ENCODE measurements at regions of chr2 and their contacts with region 1.

Region 1: GRCh38 chr2:24084386-24085361 is at the start of gene TP53I3:
- DNase-seq: peak; percentile 94
- ATAC-seq: peak; percentile 97
- total RNA-seq, gene TP53I3: 17.2 TPM

Region 2: DNA sequence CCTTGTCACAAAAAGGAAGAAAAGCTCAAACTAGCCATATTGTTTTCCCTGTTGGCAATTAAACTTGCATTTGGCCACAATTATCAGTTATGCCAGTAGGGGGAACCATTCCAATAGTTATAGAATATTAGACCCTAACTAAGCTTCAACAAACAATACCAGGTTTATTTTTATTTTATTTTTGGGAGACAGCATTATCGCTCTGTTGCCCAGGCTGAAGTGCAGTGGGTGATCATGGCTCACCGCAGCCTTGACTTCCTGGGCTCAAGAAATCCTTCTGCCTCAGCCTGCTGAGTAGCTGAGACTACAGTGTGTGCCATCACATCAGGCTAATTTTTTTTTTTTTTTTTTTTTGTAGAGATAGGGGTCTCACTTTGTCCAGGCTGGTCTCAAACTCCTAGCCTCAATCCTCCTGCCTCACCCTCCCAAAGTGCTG is 259.9 kb before region 1 on chr2:
- intact Hi-C with region 1: loop called (anchors 5 kb)
- DNase-seq: no peak
- ATAC-seq: no peak

Measured in Right ventricle myocardium inferior (tissue), 1 donor.